Activated CD8-positive, alpha-beta memory T cell treated with anti-CD3 and anti-CD28 coated beads, Interleukin-2, amount 10 ng/mL, durations not matched to agents 7 days and 5 days (primary cell): ENCODE measurements at regions of chr15 and their contacts with region 1.

Region 1: DNA sequence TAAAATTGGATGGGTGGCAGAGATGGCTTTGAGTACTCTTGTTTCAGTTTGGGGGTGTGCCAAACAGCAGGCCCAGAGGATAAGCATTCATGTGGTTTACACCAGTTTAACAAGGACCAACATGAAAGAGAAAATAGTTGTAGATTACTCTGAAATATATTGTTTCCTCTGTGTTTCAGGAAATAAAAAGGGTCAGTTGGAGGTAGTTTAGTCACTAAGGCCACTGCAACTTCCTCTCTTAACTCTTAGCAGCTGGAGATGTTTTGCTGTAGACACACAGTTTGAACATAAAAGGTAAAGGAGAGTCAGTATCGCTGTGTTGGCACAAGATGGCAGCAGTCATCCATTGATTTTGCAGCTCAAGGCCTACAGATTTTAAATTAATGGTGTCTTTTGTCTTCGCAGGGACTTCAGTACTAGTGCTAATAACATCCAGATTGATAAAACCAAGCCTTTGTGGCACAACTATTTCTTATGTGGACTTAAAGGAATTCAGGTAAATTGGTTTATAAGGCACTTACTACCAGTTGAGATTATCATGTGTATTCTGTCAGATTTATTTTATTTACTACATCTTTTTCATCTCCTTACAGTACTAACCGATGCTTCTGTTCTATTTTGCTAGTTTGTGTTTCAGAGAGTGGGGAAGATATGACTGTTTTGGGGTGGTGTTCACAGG is 65.5 kb downstream of the GALK2 start:
- DNase-seq: peak; percentile 74
- ATAC-seq: peak; percentile 94
- H3K4me3 Mint-ChIP-seq: no peak overlapping the region
- H3K27ac Mint-ChIP-seq: peak overlapping the region; percentile 74
- H3K4me1 Mint-ChIP-seq: peaks cover 25% of the 10 kb centered on the region
- H3K27me3 Mint-ChIP-seq: no peaks in the 10 kb centered on the region

Region 2: DNA sequence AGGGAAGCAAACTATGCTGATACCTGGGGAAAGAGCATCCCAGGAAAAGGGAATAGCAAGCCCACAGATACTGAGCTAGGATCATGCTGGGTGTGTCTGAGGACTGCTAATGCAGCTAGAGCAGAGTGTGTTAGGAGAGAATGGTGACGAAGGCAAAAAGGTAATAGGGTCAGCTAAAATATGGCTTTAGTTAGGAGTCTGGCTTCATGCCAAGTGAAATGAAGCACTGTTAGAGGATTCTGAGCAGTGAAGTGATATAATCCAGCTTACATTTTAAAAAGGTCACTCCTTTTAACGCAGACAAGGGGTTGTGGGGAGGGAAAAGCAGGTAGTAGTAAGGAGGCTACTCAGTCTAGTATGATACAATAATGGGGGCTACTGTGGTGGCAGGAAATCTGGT is 219.7 kb before region 1 on chr15:
- CTCF ChIA-PET with region 1: no interaction called
- DNase-seq: no peak
- ATAC-seq: no peak
- H3K4me3 Mint-ChIP-seq: no peak overlapping the region
- H3K27ac Mint-ChIP-seq: no peak overlapping the region
- H3K4me1 Mint-ChIP-seq: no peaks in the 10 kb centered on the region
- H3K27me3 Mint-ChIP-seq: no peaks in the 10 kb centered on the region

Region 3: DNA sequence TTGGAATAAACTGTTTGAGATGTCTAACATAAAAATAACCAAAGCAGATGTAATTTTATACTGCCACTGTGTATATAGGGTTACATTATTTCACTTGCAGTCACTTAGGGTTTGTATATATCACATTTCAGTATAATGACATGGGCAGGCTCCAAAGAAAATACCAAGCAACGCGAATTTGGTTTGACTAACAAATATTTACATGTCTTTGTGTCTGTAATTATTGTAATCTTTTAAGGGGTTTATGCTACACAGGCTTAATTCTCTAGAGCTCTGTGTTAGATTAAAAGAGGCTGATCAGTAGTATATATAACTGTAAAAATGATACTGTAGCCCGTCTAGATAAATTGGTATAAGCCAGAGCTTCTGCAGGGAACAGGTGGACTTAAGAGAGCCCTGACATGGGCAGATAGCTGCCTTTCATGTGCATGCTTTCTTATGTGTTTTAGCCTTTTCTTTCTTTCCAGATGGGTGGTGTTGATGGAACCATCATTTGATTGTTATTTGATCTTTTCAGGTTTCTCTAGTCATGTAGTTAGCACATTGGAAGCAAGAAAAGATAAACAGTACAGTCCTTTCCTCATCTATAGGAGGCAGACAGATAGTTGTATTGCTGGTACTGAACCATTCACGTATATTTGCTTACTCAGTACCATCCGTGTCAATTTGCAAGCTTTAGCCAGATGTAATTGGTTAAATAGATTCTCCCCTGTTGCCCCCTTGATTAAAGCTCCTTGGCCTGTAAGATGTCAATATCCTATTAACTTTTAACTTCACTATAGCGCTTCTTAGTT is 20.6 kb after region 1 on chr15:
- CTCF ChIA-PET with region 1: no interaction called
- DNase-seq: no peak
- ATAC-seq: no peak
- H3K4me3 Mint-ChIP-seq: no peak overlapping the region
- H3K27ac Mint-ChIP-seq: no peak overlapping the region
- H3K4me1 Mint-ChIP-seq: no peaks in the 10 kb centered on the region
- H3K27me3 Mint-ChIP-seq: no peaks in the 10 kb centered on the region

Region 4: GRCh38 chr15:49421991-49422390 is 186.4 kb after region 1 on chr15:
- CTCF ChIA-PET with region 1: interaction called, 53 read pairs
- DNase-seq: no peak
- ATAC-seq: no peak
- H3K4me3 Mint-ChIP-seq: peak overlapping the region; percentile 29
- H3K27ac Mint-ChIP-seq: peak overlapping the region; percentile 67
- H3K4me1 Mint-ChIP-seq: peaks cover 4% of the 10 kb centered on the region
- H3K27me3 Mint-ChIP-seq: peaks cover 12% of the 10 kb centered on the region

Region 5: DNA sequence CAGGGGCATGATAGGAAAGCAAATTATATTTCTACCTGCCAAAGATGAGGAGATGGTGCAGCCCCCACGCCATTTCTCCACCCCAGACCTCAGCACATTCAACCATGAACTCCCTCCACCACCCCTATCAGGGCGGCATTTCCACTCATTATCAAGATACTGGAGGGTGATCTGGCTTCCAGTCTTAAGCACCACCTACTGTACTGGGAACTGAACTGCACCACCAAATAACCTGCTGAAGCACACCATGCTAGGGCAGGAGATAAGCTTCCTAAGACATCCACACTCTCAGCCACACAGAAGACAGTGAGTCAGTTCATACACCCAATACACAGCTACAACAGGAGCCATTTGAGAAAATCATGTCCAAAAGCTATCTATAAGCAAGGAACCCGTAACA is 286.2 kb after region 1 on chr15:
- CTCF ChIA-PET with region 1: no interaction called
- DNase-seq: no peak
- ATAC-seq: no peak
- H3K4me3 Mint-ChIP-seq: no peak overlapping the region
- H3K27ac Mint-ChIP-seq: no peak overlapping the region
- H3K4me1 Mint-ChIP-seq: no peaks in the 10 kb centered on the region
- H3K27me3 Mint-ChIP-seq: peaks cover 9% of the 10 kb centered on the region